ENCODE measurements at regions of chr1 and their contacts with region 1.

Region 1: GRCh38 chr1:207698822-207699483 is 52.9 kb upstream of the CD46 start:
- DNase-seq: peak; percentile 25 to 81
- H3K4me3 ChIP-seq: no peak overlapping the region
- H3K27ac ChIP-seq: no peak overlapping the region
- H3K4me1 ChIP-seq: peaks cover 0 to 2% (median 0%) of the 10 kb centered on the region in 4 experiments; a peak in 1 of 7 replicates
- H3K27me3 ChIP-seq: no peaks in the 10 kb centered on the region
- CTCF ChIP-seq: peak; percentile 33 to 95 (median 73)
- EP300 ChIP-seq: no peak
- POLR2A ChIP-seq: no peak
- RAD21 ChIP-seq: peak; percentile 76

Region 2: DNA sequence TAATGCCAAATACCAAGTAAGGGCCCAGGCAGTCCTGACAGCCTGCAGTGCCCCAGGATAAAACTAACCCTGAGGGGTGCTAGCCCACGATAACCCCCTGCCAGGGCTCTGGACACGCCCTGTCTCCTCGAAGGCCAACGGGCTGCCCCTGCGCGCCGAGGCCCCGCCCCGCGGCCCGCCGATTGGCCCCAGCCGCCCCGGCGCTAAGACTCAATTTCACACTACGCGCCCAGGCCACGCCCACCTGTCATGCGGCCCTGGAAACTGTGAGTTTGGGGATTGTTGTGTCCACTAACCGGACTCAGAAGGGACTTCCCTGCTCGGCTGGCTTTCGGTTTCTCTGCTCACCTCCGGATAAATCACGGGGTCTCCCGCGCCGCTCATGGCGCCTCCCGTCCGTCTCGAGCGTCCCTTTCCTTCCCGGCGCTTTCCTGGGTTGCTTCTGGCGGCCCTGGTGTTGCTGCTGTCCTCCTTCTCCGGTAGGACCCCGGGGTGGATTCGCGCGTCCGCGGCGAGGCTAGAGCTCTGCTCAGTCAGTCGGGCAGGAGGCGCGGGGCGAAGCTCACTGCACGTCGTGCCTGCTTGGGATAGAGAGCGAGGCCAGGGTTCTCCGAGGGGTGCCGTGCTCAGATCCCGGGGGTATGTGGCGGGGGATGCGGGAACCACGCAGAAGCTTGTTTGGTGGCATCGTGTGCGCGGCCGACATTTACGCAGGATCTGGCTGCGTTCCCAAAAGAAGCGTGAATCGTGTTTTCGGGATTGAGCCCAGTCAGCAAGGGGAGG is 53.9 kb before region 1 on chr1 and contains the start of gene CR1L:
- CTCF ChIA-PET with region 1: no interaction called
- POLR2A ChIA-PET with region 1: no interaction called
- DNase-seq: no peak
- H3K4me3 ChIP-seq: no peak within 1 kb of the TSS
- H3K27ac ChIP-seq: no peak within 1 kb of the TSS
- H3K4me1 ChIP-seq: no peaks in the 10 kb centered on the region
- H3K27me3 ChIP-seq: no peaks in the 10 kb centered on the region
- CTCF ChIP-seq: no peak
- EP300 ChIP-seq: no peak
- POLR2A ChIP-seq: no peak
- RAD21 ChIP-seq: no peak
- total RNA-seq, gene CR1L: not detected in 2 replicates

Region 3: DNA sequence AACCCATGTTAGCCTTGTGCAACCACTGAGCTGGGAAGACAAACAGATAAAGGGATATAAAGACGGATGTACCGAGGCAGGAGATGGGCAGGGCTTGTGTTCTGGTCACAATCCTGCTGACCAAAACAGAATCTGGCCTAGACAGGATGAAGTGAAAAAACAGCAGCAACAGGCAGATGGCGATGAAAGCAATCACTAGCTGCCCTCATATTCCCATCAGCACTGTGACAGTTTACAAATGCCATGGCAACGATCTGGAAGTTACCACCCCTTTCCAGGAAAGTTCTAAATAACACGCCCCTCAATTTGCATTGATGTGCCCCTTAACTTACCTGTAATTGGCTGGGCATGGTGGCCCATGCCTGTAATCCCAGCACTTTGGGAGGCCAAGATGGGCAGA is 12.3 kb after region 1 on chr1:
- CTCF ChIA-PET with region 1: interaction called, 25 read pairs
- POLR2A ChIA-PET with region 1: no interaction called
- DNase-seq: peak in 1 of 2 experiments; percentile 9
- H3K4me3 ChIP-seq: no peak overlapping the region
- H3K27ac ChIP-seq: no peak overlapping the region
- H3K4me1 ChIP-seq: no peaks in the 10 kb centered on the region
- H3K27me3 ChIP-seq: no peaks in the 10 kb centered on the region
- CTCF ChIP-seq: peak in 2 of 3 experiments; percentile 1 to 50; a peak in 3 of 4 replicates
- EP300 ChIP-seq: no peak
- POLR2A ChIP-seq: no peak
- RAD21 ChIP-seq: peak; percentile 41 to 53

Measured in H1 (cell line).